MCF 10A (cell line): ENCODE measurements at regions of chr3 and their contacts with region 1.

Region 1: GRCh38 chr3:18988614-18989229 is 159.6 kb upstream of the KCNH8 start:
- DNase-seq: peak; percentile 63
- H3K4me3 Mint-ChIP-seq: no peak overlapping the region
- H3K27ac Mint-ChIP-seq: no peak overlapping the region
- H3K4me1 Mint-ChIP-seq: peaks cover 6% of the 10 kb centered on the region
- H3K27me3 Mint-ChIP-seq: no peaks in the 10 kb centered on the region
- CTCF ChIP-seq: peak; percentile 73

Region 2: DNA sequence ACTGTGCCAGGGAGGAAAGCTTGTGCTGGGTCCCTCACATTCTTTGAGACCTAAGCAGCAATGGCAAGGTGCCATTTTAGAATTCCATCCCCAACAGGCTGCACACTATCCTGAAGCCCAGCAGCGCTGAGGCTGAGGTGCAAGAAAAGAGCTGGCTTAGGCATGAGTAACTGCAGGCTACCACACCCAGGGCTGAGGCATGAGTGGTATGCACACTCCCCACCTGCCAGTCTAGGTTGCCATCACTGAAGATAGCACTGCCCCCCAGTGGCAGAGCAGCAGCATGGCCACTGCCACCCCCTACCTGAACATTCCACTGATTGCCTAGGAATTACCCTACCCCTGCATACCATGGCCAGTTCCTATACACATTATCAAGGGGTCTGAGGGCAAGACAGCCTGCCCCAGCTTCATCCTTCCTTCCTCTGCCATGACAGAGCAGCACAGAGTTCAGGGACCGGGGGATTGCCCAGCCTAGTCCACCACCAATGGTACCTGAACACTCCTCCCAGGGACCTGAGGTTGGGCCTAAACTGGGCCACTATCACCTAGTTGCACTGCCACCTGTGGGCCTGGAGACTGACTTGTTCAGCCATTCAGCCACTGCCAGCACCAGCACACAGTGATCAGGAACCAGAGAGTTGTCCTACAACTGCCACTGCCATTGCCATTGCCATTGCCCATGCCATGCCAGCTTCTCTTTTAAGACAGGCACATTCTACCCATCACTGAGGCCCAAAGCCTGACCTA is 693.4 kb before region 1 on chr3:
- CTCF ChIA-PET with region 1: no interaction called
- POLR2A ChIA-PET with region 1: no interaction called
- intact Hi-C with region 1: loop called (anchors 10 kb)
- DNase-seq: peak; percentile 89
- H3K4me3 Mint-ChIP-seq: no peak overlapping the region
- H3K27ac Mint-ChIP-seq: peak overlapping the region; percentile 82
- H3K4me1 Mint-ChIP-seq: peaks cover 6% of the 10 kb centered on the region
- H3K27me3 Mint-ChIP-seq: no peaks in the 10 kb centered on the region
- CTCF ChIP-seq: peak; percentile 90

Region 3: DNA sequence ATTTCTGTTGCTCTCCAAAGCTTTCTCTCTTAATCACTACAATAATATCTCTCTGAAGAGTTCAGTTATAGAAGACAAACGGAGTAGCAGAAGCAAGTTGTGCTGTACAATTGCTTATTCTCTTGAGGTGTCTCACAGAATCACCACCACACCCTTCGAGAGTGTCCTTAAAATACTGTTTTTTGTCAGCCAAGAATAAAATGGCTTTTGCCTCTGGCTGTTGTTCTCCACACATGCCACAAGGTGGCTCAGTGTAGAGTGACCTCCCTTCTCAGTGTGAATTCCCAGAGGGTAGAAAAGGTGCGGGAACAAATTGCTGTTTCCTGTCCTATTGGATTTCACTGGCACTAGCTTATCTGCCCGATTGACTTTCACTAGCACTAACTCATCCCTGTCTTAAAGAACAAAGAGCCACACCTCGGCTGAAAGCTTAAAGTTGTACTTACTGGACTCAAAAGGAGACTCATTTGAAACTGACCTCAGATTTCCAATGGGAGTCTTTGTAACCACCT is 429.3 kb before region 1 on chr3:
- CTCF ChIA-PET with region 1: interaction called, 71 read pairs
- POLR2A ChIA-PET with region 1: interaction called, 5 read pairs
- intact Hi-C with region 1: loop called (anchors 1 kb)
- DNase-seq: peak; percentile 72
- H3K4me3 Mint-ChIP-seq: no peak overlapping the region
- H3K27ac Mint-ChIP-seq: no peak overlapping the region
- H3K4me1 Mint-ChIP-seq: no peaks in the 10 kb centered on the region
- H3K27me3 Mint-ChIP-seq: peaks cover 45% of the 10 kb centered on the region
- CTCF ChIP-seq: peak; percentile 74

Region 4: DNA sequence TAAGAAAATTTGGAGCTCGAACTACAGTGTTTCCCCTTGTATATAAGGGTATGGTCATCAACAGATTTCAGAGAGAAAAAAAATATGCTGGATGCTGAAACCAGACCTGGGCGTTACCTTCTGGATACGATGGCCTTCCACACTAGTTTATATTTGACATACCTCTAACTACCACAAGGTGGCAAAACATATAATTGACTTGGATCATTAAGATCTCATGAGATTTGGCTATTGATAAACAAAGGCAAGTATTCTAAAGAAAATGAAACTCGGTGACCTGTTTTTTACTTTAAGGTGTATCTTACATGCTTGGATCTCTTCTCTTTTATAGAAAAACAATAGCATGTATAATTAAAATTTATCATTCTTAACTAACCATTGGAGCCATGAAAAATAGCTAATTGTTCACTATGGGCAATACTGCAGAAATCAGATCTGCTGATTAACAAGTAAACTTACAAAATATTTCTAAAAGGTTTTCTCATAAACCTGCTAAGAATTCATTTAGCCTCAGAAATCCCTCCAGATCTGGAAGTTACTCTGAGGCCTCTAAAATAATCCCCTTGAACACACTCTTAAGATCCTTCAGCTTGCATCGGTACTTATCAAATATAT is 141.0 kb before region 1 on chr3:
- CTCF ChIA-PET with region 1: interaction called, 37 read pairs
- POLR2A ChIA-PET with region 1: no interaction called
- intact Hi-C with region 1: loop called (anchors 1 kb)
- DNase-seq: peak; percentile 44
- H3K4me3 Mint-ChIP-seq: no peak overlapping the region
- H3K27ac Mint-ChIP-seq: no peak overlapping the region
- H3K4me1 Mint-ChIP-seq: no peaks in the 10 kb centered on the region
- H3K27me3 Mint-ChIP-seq: no peaks in the 10 kb centered on the region
- CTCF ChIP-seq: peak; percentile 22

Region 5: DNA sequence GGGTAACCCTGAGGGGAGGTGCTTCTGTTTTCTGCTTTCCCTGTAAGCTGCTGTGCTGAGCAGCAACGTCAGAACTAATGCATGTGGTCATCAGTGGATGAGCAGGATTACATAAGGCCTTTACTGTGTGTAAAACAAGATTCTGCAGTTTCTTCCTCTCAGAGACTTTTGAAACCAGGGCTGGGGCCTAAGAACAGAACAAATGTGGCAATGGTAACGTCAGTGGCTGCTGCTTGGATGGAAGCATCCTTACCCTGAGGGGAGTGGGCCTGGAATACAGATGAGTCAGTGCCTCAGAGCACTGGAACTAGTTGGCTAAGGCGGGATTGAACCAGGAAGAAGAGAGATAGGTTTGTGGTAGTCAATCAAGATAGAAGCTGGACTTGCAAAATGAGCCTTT is 20.6 kb before region 1 on chr3:
- CTCF ChIA-PET with region 1: interaction called, 16 read pairs
- POLR2A ChIA-PET with region 1: interaction called, 3 read pairs
- intact Hi-C with region 1: no loop called
- DNase-seq: peak; percentile 80
- H3K4me3 Mint-ChIP-seq: no peak overlapping the region
- H3K27ac Mint-ChIP-seq: peak overlapping the region; percentile 25
- H3K4me1 Mint-ChIP-seq: peaks cover 17% of the 10 kb centered on the region
- H3K27me3 Mint-ChIP-seq: no peaks in the 10 kb centered on the region
- CTCF ChIP-seq: no peak